Activated CD4-positive, alpha-beta T cell treated with anti-CD3 and anti-CD28 coated beads for 36 hours (primary cell): ENCODE measurements at regions of chr6 and their contacts with region 1.

Region 1: DNA sequence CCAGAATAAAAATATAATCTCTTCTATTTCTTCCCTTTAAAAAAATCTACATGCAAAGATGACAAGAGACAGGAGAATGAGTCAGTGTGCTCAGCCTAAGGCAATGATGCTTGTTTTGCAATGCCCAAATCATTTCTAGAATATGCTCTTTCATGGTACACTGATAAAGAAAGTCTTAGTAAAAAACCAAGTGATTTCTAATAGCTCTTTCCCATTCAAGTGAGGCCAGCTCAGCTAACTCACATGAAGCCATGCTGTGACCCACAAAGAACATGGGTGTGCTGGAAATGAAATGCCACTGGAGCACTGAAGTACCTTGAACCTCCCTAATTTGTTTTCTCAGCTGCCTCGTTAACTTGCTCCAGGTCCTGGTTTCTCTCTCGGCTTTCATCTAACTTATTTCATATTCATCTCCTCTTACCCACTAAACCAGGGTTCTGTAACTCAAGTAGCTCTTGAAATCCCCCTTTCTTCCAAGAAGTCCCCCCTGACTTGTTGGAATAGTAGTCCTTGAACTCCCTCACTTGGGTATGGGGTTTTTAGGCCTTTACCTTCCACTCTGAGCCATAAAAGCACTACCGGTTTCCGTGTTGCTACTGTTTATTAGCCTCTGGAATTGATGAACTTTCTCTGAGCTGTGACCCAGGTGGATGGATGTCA is 92.7 kb downstream of the IRF4 start:
- DNase-seq: peak; percentile 73
- ATAC-seq: peak; percentile 92
- H3K4me3 Mint-ChIP-seq: peak overlapping the region; percentile 58
- H3K27ac Mint-ChIP-seq: peak overlapping the region; percentile 100
- H3K4me1 Mint-ChIP-seq: peaks cover 88% of the 10 kb centered on the region
- H3K27me3 Mint-ChIP-seq: no peaks in the 10 kb centered on the region

Region 2: GRCh38 chr6:356828-357251 is 127.4 kb before region 1 on chr6:
- CTCF ChIA-PET with region 1: no interaction called
- POLR2A ChIA-PET with region 1: no interaction called
- intact Hi-C with region 1: no loop called
- DNase-seq: peak; percentile 48
- ATAC-seq: peak; percentile 75
- H3K4me3 Mint-ChIP-seq: no peak overlapping the region
- H3K27ac Mint-ChIP-seq: peak overlapping the region; percentile 61
- H3K4me1 Mint-ChIP-seq: peaks cover 16% of the 10 kb centered on the region
- H3K27me3 Mint-ChIP-seq: no peaks in the 10 kb centered on the region

Region 3: GRCh38 chr6:422433-423054 is 61.7 kb before region 1 on chr6:
- CTCF ChIA-PET with region 1: no interaction called
- POLR2A ChIA-PET with region 1: no interaction called
- intact Hi-C with region 1: loop called in 1 of 2 experiments (anchors 1 kb)
- DNase-seq: peak; percentile 87
- ATAC-seq: peak; percentile 99
- H3K4me3 Mint-ChIP-seq: no peak overlapping the region
- H3K27ac Mint-ChIP-seq: peak overlapping the region; percentile 63
- H3K4me1 Mint-ChIP-seq: peaks cover 31% of the 10 kb centered on the region
- H3K27me3 Mint-ChIP-seq: no peaks in the 10 kb centered on the region

Region 4: GRCh38 chr6:467671-468082 is 16.5 kb before region 1 on chr6:
- CTCF ChIA-PET with region 1: interaction called, 14 read pairs
- POLR2A ChIA-PET with region 1: interaction called, 3 read pairs
- intact Hi-C with region 1: no loop called
- DNase-seq: no peak
- ATAC-seq: peak; percentile 80
- H3K4me3 Mint-ChIP-seq: no peak overlapping the region
- H3K27ac Mint-ChIP-seq: no peak overlapping the region
- H3K4me1 Mint-ChIP-seq: peaks cover 37% of the 10 kb centered on the region
- H3K27me3 Mint-ChIP-seq: peaks cover 11% of the 10 kb centered on the region

Region 5: DNA sequence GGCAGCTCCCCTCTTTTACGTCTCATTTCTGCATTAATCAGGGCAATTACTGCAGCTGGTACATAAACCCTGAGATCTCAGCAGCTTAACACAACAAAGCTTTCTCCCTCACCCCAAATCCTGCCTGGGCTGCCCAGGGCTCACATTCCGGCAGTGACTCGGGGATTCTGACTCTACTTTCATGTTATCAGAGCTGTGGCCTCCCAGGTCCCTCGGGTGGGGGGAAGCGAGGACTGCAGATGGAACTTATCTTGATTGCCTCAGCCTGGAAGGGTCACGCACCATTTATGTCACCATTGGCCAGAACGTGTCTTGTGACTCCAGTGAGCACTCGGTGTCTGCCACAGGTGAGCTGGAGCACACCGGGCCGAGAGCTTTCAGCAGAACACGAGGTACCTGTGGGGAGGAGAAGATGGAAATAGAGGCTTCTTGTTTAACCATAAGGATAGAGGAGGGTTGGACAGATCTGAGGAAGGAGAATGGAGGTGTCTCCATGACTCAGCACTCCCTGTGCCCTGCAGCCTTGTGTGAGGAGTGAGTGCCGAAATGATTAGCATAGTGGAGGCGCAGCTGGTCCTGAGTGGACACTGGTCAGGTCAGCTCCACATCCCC is 297.2 kb after region 1 on chr6:
- CTCF ChIA-PET with region 1: no interaction called
- POLR2A ChIA-PET with region 1: no interaction called
- intact Hi-C with region 1: no loop called
- DNase-seq: no peak
- ATAC-seq: no peak
- H3K4me3 Mint-ChIP-seq: no peak overlapping the region
- H3K27ac Mint-ChIP-seq: no peak overlapping the region
- H3K4me1 Mint-ChIP-seq: no peaks in the 10 kb centered on the region
- H3K27me3 Mint-ChIP-seq: peaks cover 19% of the 10 kb centered on the region

Region 6: GRCh38 chr6:1263039-1263849 is 779.0 kb after region 1 on chr6:
- CTCF ChIA-PET with region 1: no interaction called
- POLR2A ChIA-PET with region 1: no interaction called
- intact Hi-C with region 1: no loop called
- DNase-seq: no peak
- ATAC-seq: no peak
- H3K4me3 Mint-ChIP-seq: no peak overlapping the region
- H3K27ac Mint-ChIP-seq: no peak overlapping the region
- H3K4me1 Mint-ChIP-seq: no peaks in the 10 kb centered on the region
- H3K27me3 Mint-ChIP-seq: peaks cover 14% of the 10 kb centered on the region

Region 7: GRCh38 chr6:1498491-1499113 is 1014.4 kb after region 1 on chr6:
- CTCF ChIA-PET with region 1: no interaction called
- POLR2A ChIA-PET with region 1: no interaction called
- intact Hi-C with region 1: no loop called
- DNase-seq: no peak
- ATAC-seq: no peak
- H3K4me3 Mint-ChIP-seq: no peak overlapping the region
- H3K27ac Mint-ChIP-seq: no peak overlapping the region
- H3K4me1 Mint-ChIP-seq: no peaks in the 10 kb centered on the region
- H3K27me3 Mint-ChIP-seq: peaks cover 9% of the 10 kb centered on the region